Activated naive CD8-positive, alpha-beta T cell treated with anti-CD3 and anti-CD28 coated beads, Interleukin-2, amount 10 ng/mL, durations not matched to agents 7 days and 5 days (primary cell): ENCODE measurements at regions of chr10 and their contacts with region 1.

Region 1: DNA sequence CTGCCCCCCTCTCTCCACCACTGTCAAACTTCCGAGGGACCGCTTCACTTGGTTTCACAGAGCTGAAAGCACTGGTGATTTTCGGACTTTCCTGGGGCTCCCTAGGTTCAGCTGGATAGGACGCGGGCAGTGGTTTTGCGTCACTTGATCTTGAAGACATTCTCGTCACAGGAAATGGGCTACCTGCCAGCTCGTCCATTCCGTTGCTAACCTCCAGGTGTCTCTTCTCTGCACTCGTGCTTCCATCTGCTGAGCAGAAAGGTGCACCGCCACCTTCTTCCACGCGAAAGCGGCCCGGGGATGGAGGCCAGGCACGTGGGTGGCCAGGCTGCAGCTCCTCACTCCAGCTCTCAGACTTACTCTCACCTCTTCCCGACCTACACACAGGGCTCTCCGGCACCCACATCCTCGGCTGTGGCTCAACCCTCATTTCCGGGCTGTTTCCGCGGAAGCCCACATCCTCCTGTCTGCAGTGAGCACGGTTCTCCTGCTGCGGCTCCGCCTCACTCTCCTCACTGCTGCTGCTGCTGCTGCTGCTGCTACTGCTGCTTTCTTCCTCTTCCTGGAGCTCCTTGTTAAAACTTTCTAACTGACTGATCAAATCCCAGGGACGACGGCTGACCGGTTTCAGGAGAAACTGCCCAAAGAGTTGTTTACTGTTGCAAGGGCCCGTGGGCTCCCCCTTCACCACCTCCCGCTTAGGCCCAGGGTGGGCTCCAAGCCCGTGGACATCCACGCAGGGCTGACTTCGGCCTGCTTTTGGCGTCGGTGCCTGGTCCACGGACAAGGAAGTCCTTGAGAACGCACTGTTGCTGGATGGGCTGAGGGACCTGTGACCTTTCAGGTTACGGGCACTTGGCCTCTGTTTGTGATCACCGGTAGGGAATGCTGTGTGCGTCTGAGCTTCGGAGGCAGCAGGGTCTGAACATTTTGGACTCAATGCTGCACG is 32.1 kb downstream of the JCAD start:
- DNase-seq: peak; percentile 97
- ATAC-seq: peak; percentile 94
- H3K4me3 Mint-ChIP-seq: peak overlapping the region; percentile 78
- H3K27ac Mint-ChIP-seq: peak overlapping the region; percentile 90
- H3K4me1 Mint-ChIP-seq: peaks cover 27% of the 10 kb centered on the region
- H3K27me3 Mint-ChIP-seq: peaks cover 54% of the 10 kb centered on the region

Region 2: GRCh38 chr10:30013757-30014156 is 13.6 kb before region 1 on chr10:
- POLR2A ChIA-PET with region 1: no interaction called
- DNase-seq: no peak
- ATAC-seq: no peak
- H3K4me3 Mint-ChIP-seq: no peak overlapping the region
- H3K27ac Mint-ChIP-seq: no peak overlapping the region
- H3K4me1 Mint-ChIP-seq: peaks cover 3% of the 10 kb centered on the region
- H3K27me3 Mint-ChIP-seq: peaks cover 45% of the 10 kb centered on the region

Region 3: DNA sequence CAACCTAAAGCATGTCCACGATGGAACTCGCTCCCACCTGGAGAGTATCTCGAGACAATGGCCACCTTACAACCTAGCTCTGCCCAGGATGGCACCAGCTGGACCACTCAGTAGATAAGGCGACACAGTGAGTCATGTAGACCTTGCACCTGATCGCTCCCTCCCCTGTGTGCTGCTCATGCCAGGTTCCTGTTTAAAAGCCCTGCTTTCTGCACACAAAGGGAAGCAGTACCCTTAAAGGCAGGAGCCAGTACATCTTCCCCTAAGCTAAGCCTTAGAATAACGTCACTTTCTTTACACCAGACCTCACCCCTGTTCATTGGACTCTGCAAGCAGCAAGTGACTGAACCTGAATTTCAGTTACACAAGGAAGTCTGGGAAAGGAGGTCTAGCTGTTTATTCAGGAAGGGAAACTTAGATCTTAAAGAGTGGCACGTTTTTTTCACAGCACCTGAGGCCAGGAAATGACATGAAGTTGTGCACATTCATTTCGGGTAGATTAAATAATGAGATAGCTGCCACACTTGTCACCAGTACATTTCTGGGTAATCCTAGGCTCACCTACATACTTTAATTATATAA is 203.8 kb after region 1 on chr10:
- POLR2A ChIA-PET with region 1: interaction called, 11 read pairs
- DNase-seq: peak; percentile 31
- ATAC-seq: peak; percentile 76
- H3K4me3 Mint-ChIP-seq: peak overlapping the region; percentile 41
- H3K27ac Mint-ChIP-seq: peak overlapping the region; percentile 75
- H3K4me1 Mint-ChIP-seq: peaks cover 16% of the 10 kb centered on the region
- H3K27me3 Mint-ChIP-seq: peaks cover 22% of the 10 kb centered on the region

Region 4: DNA sequence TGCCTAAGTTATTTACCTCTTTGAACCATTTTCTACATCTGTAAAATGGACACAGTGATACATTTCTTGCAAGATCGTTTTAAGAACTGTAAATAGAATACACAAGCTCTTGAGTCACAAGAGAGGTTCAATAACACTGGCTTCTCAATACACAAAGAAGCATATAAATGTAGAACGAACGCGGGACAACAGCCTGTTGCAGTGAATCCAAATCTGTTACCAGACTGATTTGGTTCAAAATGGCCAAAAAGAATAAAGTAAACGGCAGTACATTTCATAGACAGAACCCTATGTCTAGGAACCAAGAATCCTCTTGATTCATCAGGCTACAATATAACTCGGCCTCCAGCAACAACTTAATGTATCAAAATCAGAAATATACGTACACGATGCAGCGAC is 321.0 kb after region 1 on chr10:
- POLR2A ChIA-PET with region 1: interaction called, 14 read pairs
- DNase-seq: no peak
- ATAC-seq: peak; percentile 24
- H3K4me3 Mint-ChIP-seq: peak overlapping the region; percentile 90
- H3K27ac Mint-ChIP-seq: peak overlapping the region; percentile 91
- H3K4me1 Mint-ChIP-seq: peaks cover 28% of the 10 kb centered on the region
- H3K27me3 Mint-ChIP-seq: peaks cover 8% of the 10 kb centered on the region